Naive thymus-derived CD4-positive, alpha-beta T cell (primary cell): ENCODE measurements at regions of chr17 and their contacts with region 1.

Region 1: GRCh38 chr17:46193626-46194392 is 580 bp upstream of the KANSL1 start:
- DNase-seq: peak; percentile 85 to 95 (median 92)
- ATAC-seq: peak; percentile 80
- H3K4me3 ChIP-seq: peak overlapping the region; percentile 84
- H3K4me3 Mint-ChIP-seq: peak overlapping the region; percentile 75 to 98 (median 84)
- H3K27ac ChIP-seq: peak overlapping the region; percentile 93
- H3K27ac Mint-ChIP-seq: peak overlapping the region; percentile 87 to 100 (median 97)
- H3K4me1 ChIP-seq: peaks cover 47 to 51% of the 10 kb centered on the region in 2 donors
- H3K4me1 Mint-ChIP-seq: peaks cover 44 to 67% (median 61%) of the 10 kb centered on the region in 7 donors
- H3K27me3 ChIP-seq: no peaks in the 10 kb centered on the region
- H3K27me3 Mint-ChIP-seq: no peaks in the 10 kb centered on the region

Region 2: DNA sequence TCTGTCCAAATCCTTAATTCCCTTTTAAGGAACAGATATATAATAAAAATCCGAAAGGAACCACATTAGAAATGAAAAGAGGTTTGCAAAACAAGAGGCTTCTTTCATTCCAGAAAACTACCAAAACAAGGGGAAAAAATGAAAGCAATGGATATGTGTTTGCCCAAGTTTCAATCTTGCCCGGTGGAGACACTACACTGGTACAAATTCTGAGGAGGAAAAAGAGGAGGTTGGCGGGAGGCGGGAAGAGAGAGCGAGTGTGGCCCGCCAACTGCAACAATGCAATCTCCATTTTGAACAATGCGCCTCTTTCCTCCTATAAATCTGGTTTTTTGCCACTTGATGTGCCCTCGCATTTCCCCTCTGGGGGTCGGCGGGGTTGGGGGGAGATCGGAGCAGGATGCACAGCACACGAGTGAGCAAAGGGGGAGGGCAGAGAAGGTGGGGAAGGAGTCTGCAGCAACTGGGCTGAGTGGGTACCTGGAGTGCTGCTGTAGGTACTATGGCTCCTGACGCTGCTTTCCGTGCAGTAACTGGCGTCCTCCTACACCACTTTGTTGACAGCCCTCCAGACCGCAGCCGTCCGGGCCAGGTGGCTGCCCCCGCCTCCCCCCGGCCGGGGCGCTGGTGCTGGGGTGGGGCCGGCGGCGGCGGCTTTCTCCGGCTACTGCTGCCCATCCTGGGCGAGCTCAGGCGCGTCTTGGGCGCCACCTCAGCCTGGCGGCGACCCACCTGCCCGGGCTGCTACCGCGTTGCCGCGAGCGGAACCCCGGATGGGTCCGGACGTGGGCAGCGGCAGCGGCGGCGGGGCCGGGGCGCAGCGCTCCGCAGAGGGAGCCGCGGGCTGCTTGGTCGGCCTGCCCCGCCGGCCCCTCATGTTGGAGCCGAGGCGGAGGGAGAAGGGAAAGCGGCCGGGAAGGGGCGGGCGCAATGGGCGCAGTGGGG is 609.4 kb before region 1 on chr17:
- CTCF ChIA-PET with region 1: no interaction called
- POLR2A ChIA-PET with region 1: no interaction called
- intact Hi-C with region 1: loop called in 1 of 2 experiments (anchors 1 kb)
- DNase-seq: peak; percentile 59 to 84 (median 64)
- ATAC-seq: peak; percentile 59
- H3K4me3 ChIP-seq: peak overlapping the region; percentile 81
- H3K4me3 Mint-ChIP-seq: peak overlapping the region; percentile 85 to 99 (median 97)
- H3K27ac ChIP-seq: peak overlapping the region; percentile 85
- H3K27ac Mint-ChIP-seq: peak overlapping the region; percentile 90 to 99 (median 96)
- H3K4me1 ChIP-seq: peaks cover 8 to 11% of the 10 kb centered on the region in 2 donors
- H3K4me1 Mint-ChIP-seq: peaks cover 20 to 52% (median 47%) of the 10 kb centered on the region in 7 donors
- H3K27me3 ChIP-seq: no peaks in the 10 kb centered on the region
- H3K27me3 Mint-ChIP-seq: peaks cover 0 to 2% (median 0%) of the 10 kb centered on the region in 5 donors

Region 3: GRCh38 chr17:46044286-46044928 is 149.4 kb before region 1 on chr17:
- CTCF ChIA-PET with region 1: interaction called, 9 read pairs
- POLR2A ChIA-PET with region 1: interaction called, 11 read pairs
- intact Hi-C with region 1: loop called in 1 of 2 experiments (anchors 1 kb)
- DNase-seq: peak in 7 of 9 donors; percentile 40 to 60 (median 51)
- ATAC-seq: peak; percentile 71
- H3K4me3 ChIP-seq: no peak overlapping the region
- H3K4me3 Mint-ChIP-seq: peak overlapping the region in 1 of 10 donors; percentile 52
- H3K27ac ChIP-seq: no peak overlapping the region
- H3K27ac Mint-ChIP-seq: peak overlapping the region in 8 of 9 donors; percentile 6 to 67 (median 28)
- H3K4me1 ChIP-seq: no peaks in the 10 kb centered on the region
- H3K4me1 Mint-ChIP-seq: peaks cover 2 to 23% (median 8%) of the 10 kb centered on the region in 7 donors
- H3K27me3 ChIP-seq: no peaks in the 10 kb centered on the region
- H3K27me3 Mint-ChIP-seq: no peaks in the 10 kb centered on the region

Region 4: GRCh38 chr17:46154151-46154816 is 39.5 kb before region 1 on chr17:
- CTCF ChIA-PET with region 1: no interaction called
- POLR2A ChIA-PET with region 1: interaction called, 4 read pairs
- intact Hi-C with region 1: loop called in 1 of 2 experiments (anchors 5 kb)
- DNase-seq: peak in 3 of 9 donors; percentile 14 to 44 (median 24)
- ATAC-seq: peak; percentile 58
- H3K4me3 ChIP-seq: peak overlapping the region; percentile 10
- H3K4me3 Mint-ChIP-seq: peak overlapping the region; percentile 57 to 82 (median 70)
- H3K27ac ChIP-seq: peak overlapping the region; percentile 27
- H3K27ac Mint-ChIP-seq: peak overlapping the region; percentile 4 to 87 (median 66)
- H3K4me1 ChIP-seq: peaks cover 87 to 89% of the 10 kb centered on the region in 2 donors
- H3K4me1 Mint-ChIP-seq: peaks cover 78 to 100% (median 90%) of the 10 kb centered on the region in 7 donors
- H3K27me3 ChIP-seq: no peaks in the 10 kb centered on the region
- H3K27me3 Mint-ChIP-seq: no peaks in the 10 kb centered on the region

Region 5: DNA sequence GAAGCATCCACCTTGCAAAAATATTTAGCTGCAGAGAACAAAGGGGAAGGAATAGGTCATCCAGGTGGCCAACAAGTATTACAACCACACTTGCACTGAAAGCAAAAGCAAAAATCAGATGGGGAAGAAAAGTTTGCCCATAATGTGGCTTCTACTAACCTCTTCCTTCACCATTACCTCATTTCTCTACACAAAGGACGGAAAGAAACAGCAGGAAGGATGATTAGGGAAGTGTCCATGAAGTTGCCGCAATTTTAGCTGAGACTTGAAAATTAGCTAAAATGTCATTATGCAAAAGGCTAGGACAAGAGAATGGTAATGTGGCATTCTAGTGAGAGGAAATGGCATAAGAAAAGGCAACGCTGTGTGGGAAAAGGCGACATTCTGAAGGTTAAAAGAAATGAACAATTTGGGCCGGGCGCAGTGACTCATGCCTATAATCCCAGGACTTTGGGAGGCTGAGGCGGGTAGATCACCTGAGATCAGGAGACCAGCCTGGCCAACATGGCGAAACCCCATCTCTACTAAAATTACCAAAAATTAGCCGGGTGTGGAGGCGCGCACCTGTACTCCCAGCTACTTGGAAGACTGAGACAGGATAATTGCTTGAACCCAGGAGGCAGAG is 14.3 kb before region 1 on chr17:
- CTCF ChIA-PET with region 1: interaction called, 6 read pairs
- POLR2A ChIA-PET with region 1: interaction called, 5 read pairs
- intact Hi-C with region 1: loop called in 1 of 2 experiments (anchors 1 kb)
- DNase-seq: no peak
- ATAC-seq: peak; percentile 76
- H3K4me3 ChIP-seq: no peak overlapping the region
- H3K4me3 Mint-ChIP-seq: peak overlapping the region; percentile 20 to 98 (median 58)
- H3K27ac ChIP-seq: peak overlapping the region; percentile 26
- H3K27ac Mint-ChIP-seq: peak overlapping the region; percentile 12 to 86 (median 53)
- H3K4me1 ChIP-seq: peaks cover 71 to 77% of the 10 kb centered on the region in 2 donors
- H3K4me1 Mint-ChIP-seq: peaks cover 73 to 100% (median 94%) of the 10 kb centered on the region in 7 donors
- H3K27me3 ChIP-seq: no peaks in the 10 kb centered on the region
- H3K27me3 Mint-ChIP-seq: no peaks in the 10 kb centered on the region

Region 6: GRCh38 chr17:46266656-46267544 is 73.1 kb after region 1 on chr17:
- CTCF ChIA-PET with region 1: interaction called, 3 read pairs
- POLR2A ChIA-PET with region 1: interaction called, 3 read pairs
- intact Hi-C with region 1: loop called in 1 of 2 experiments (anchors 1 kb)
- DNase-seq: peak; percentile 44 to 94 (median 81)
- ATAC-seq: peak; percentile 87
- H3K4me3 ChIP-seq: peak overlapping the region; percentile 79
- H3K4me3 Mint-ChIP-seq: peak overlapping the region; percentile 89 to 96 (median 93)
- H3K27ac ChIP-seq: peak overlapping the region; percentile 79
- H3K27ac Mint-ChIP-seq: peak overlapping the region; percentile 76 to 95 (median 85)
- H3K4me1 ChIP-seq: peaks cover 25% of the 10 kb centered on the region in 2 donors
- H3K4me1 Mint-ChIP-seq: peaks cover 18 to 38% (median 34%) of the 10 kb centered on the region in 7 donors
- H3K27me3 ChIP-seq: no peaks in the 10 kb centered on the region
- H3K27me3 Mint-ChIP-seq: peaks cover 0 to 52% (median 0%) of the 10 kb centered on the region in 5 donors